Mammary epithelial cell (primary cell): ENCODE measurements at regions of chrX and their contacts with region 1.

Region 1: GRCh38 chrX:132488819-132489577 is at the start of gene MBNL3:
- DNase-seq: peak; percentile 66
- H3K4me3 ChIP-seq: peak within 1 kb of the TSS; percentile 61 to 72 (median 67)
- H3K27ac ChIP-seq: peak within 1 kb of the TSS; percentile 75
- H3K4me1 ChIP-seq: peaks cover 10% of the 10 kb centered on the region
- H3K27me3 ChIP-seq: no peaks in the 10 kb centered on the region
- CTCF ChIP-seq: no peak
- total RNA-seq, gene MBNL3: 5.7 to 12.9 TPM

Region 2: GRCh38 chrX:132092439-132093065 is 396.4 kb before region 1 on chrX:
- CTCF ChIA-PET with region 1: no interaction called
- dilution Hi-C with region 1: no loop called
- in situ Hi-C with region 1: no loop called
- intact Hi-C with region 1: loop called (anchors 10 kb)
- DNase-seq: peak; percentile 54
- H3K4me3 ChIP-seq: no peak overlapping the region
- H3K27ac ChIP-seq: no peak overlapping the region
- H3K4me1 ChIP-seq: no peaks in the 10 kb centered on the region
- H3K27me3 ChIP-seq: peaks cover 1% of the 10 kb centered on the region
- CTCF ChIP-seq: peak; percentile 89 to 90